Vagina (tissue), 2 donors: ENCODE measurements at regions of chr3 and their contacts with region 1.

Region 1: GRCh38 chr3:187465503-187465902 is 97.3 kb downstream of the RTP4 start:
- DNase-seq: no peak
- H3K4me3 ChIP-seq: no peak overlapping the region
- H3K27ac ChIP-seq: no peak overlapping the region
- H3K4me1 ChIP-seq: no peaks in the 10 kb centered on the region
- H3K27me3 ChIP-seq: no peaks in the 10 kb centered on the region
- CTCF ChIP-seq: no peak
- POLR2A ChIP-seq: no peak

Region 2: GRCh38 chr3:186967686-186968085 is 497.8 kb before region 1 on chr3:
- intact Hi-C with region 1: no loop called
- DNase-seq: no peak
- H3K4me3 ChIP-seq: no peak overlapping the region
- H3K27ac ChIP-seq: no peak overlapping the region
- H3K4me1 ChIP-seq: no peaks in the 10 kb centered on the region
- H3K27me3 ChIP-seq: no peaks in the 10 kb centered on the region
- CTCF ChIP-seq: no peak
- POLR2A ChIP-seq: no peak

Region 3: GRCh38 chr3:187450431-187451190 is 14.9 kb before region 1 on chr3:
- intact Hi-C with region 1: loop called (anchors 2 kb)
- DNase-seq: no peak
- H3K4me3 ChIP-seq: no peak overlapping the region
- H3K27ac ChIP-seq: no peak overlapping the region
- H3K4me1 ChIP-seq: no peaks in the 10 kb centered on the region
- H3K27me3 ChIP-seq: no peaks in the 10 kb centered on the region
- CTCF ChIP-seq: no peak
- POLR2A ChIP-seq: no peak

Region 4: GRCh38 chr3:187544296-187544695 is 78.8 kb after region 1 on chr3:
- intact Hi-C with region 1: no loop called
- DNase-seq: no peak
- H3K4me3 ChIP-seq: no peak overlapping the region
- H3K27ac ChIP-seq: no peak overlapping the region
- H3K4me1 ChIP-seq: no peaks in the 10 kb centered on the region
- H3K27me3 ChIP-seq: no peaks in the 10 kb centered on the region
- CTCF ChIP-seq: no peak
- POLR2A ChIP-seq: no peak